GM10248 (cell line): ENCODE measurements at regions of chr16 and their contacts with region 1.

Region 1: DNA sequence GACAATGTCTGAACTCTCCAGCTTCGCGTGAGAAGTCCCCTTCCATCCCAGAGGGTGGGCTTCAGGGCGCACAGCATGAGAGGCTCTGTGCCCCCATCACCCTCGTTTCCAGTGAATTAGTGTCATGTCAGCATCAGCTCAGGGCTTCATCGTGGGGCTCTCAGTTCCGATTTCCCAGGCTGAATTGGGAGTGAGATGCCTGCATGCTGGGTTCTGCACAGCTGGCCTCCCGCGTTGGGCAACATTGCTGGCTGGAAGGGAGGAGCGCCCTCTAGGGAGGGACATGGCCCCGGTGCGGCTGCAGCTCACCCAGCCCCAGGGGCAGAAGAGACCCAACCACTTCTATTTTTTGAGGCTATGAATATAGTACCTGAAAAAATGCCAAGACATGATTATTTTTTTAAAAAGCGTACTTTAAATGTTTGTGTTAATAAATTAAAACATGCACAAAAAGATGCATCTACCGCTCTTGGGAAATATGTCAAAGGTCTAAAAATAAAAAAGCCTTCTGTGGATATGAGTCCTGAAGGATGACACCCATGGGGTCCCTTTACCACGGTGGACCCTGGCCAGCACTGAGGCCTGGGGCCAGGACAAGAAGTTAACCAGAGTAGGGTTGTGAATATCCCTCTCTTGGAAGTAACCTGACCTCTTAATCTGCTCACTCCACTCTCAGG is 10.5 kb upstream of the ITGAD start:
- DNase-seq: peak; percentile 83
- CTCF ChIP-seq: peak; percentile 94

Region 2: GRCh38 chr16:30602616-30603277 is 779.9 kb before region 1 on chr16:
- CTCF ChIA-PET with region 1: no interaction called
- POLR2A ChIA-PET with region 1: no interaction called
- DNase-seq: no peak
- CTCF ChIP-seq: no peak

Region 3: GRCh38 chr16:31400191-31400590 is 17.6 kb after region 1 on chr16:
- CTCF ChIA-PET with region 1: interaction called, 10 read pairs
- POLR2A ChIA-PET with region 1: no interaction called
- DNase-seq: no peak
- CTCF ChIP-seq: no peak